Motor neuron (in vitro differentiated cells): ENCODE measurements at regions of chr21 and their contacts with region 1.

Region 1: DNA sequence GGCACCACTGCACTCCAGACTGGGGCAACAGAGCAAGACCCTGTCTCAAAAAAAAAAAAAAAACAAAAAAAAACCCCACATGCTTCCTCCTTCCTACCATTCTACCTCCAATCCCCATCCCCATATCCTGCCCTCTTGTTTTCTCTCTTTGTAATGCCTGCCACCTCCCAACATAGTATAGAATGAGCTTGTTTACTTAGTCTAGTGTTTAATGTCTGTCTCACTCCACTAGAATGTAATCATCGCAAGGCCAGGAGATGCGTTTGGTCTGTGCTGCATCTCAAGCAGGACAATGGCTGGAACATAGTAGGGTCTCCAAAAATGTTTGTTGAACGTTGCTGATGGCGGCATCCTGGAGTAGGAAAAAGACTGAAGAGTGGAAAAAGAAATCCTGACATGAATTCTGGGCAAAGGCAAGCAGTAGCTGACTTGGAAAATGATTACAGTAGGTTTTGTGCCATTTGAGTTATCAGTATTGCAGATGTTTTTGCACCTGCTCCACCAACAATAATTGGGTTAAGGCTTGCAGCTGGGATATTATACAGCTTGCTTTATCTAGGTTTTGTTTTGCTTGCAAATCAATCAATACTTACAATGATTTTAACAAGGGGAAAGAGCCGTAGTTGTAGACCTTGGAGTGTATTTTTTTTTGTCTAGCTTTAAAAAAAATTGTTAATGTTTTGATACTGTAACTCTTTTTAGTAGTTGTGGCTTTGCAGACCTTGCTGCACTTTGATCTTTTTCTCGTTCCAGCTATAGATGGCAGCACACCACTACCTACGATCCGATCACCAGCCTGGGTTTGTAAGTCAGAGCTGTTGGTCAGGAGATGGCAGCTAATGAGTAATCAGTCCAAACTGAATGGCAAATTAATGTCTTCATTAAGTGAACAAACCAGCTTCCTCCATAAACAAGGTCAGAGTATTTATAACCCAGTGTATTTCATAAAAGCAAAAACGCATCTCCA is 62.4 kb downstream of the BACH1 start:
- ATAC-seq: peak in 4 of 8 experiments; percentile 26 to 49 (median 39)
- H3K4me3 ChIP-seq: no peak overlapping the region
- H3K27ac ChIP-seq: no peak overlapping the region
- H3K4me1 ChIP-seq: no peaks in the 10 kb centered on the region

Region 2: DNA sequence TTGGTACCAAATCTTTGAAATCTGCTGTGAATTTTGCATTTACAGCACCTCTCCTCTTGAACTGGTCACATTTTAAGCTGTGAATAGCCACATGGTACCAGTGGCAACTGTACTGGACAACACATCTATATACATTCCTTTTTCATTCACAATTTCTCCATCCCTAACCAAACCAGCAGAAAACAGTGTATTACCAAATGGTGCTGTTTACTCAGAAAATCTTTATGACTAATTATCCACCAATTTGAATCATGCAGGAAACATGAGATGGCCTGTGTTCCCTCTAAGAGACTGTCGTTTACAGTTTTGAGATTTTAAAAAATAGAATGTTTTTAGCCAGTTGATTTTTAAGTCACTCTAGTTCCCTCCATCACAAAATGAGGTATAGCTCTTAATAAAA is 270.1 kb before region 1 on chr21:
- in situ Hi-C with region 1: loop called in 1 of 9 experiments (anchors 10 kb)
- ATAC-seq: peak in 1 of 8 experiments; percentile 12
- H3K4me3 ChIP-seq: no peak overlapping the region
- H3K27ac ChIP-seq: no peak overlapping the region
- H3K4me1 ChIP-seq: no peaks in the 10 kb centered on the region

Region 3: DNA sequence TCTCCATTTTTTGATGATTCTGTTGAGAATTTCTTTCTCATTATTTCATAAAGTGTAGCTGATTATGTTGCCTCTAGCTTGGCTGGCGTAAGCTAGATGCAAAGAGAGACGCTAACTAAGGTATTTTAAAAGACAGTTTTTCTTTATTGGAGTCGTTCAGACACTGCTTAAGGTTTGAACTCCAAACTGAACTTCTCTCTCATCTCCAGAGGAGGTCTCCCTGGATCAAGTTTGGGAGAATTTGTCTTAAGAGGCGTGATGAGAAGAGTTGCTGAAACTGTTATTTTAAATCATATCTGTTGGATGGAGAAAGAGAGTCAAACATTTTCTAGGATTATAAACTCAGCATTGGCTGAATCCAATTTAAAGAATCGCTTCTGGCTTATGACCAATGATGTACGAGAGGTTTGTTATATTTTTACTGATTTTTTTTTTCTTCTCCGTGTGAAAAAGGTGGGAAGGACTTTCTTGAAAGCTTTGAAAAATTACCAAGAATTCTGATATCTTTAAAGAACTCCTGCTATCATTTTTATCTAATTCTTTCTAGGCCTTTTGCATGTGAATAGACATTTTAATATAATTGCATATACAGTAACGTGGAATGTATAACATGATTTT is 196.6 kb before region 1 on chr21:
- in situ Hi-C with region 1: loop called in 2 of 9 experiments (anchors 10 kb)
- ATAC-seq: peak in 4 of 8 experiments; percentile 55 to 90 (median 70)
- H3K4me3 ChIP-seq: no peak overlapping the region
- H3K27ac ChIP-seq: no peak overlapping the region
- H3K4me1 ChIP-seq: no peaks in the 10 kb centered on the region

Region 4: GRCh38 chr21:29245104-29245643 is 115.9 kb before region 1 on chr21:
- in situ Hi-C with region 1: no loop called
- ATAC-seq: peak in 4 of 8 experiments; percentile 34 to 84 (median 41)
- H3K4me3 ChIP-seq: no peak overlapping the region
- H3K27ac ChIP-seq: no peak overlapping the region
- H3K4me1 ChIP-seq: no peaks in the 10 kb centered on the region

Region 5: GRCh38 chr21:29610779-29611360 is 249.8 kb after region 1 on chr21:
- in situ Hi-C with region 1: no loop called
- ATAC-seq: peak in 1 of 8 experiments; percentile 64
- H3K4me3 ChIP-seq: no peak overlapping the region
- H3K27ac ChIP-seq: no peak overlapping the region
- H3K4me1 ChIP-seq: no peaks in the 10 kb centered on the region

Region 6: DNA sequence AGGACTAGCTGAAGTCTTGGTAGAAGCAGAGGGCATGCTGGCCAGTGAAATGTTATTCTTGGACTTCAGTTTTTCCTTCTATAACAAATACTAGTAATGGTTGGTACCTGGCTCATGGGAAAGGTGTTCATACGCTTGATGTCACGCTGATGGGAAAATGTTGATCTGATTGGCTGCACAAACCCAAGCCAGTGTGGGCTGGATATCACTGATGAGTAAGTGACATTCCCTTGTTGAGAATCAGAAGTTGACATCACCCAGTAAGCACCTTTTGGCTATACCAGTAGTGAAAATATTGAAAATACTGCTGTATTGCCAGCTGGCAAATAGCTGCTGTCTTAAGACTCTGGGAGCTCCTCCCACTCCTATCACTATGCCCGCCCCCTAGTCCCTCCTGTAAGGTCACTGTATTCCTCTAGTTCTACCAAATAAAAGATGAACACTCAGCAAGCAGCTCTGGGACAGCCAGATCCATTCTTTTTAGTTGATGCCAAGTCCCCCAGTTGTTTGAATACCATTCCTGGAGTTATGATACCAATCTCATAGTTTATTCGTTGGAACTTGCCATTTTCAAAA is 410.5 kb after region 1 on chr21:
- in situ Hi-C with region 1: no loop called
- ATAC-seq: no peak
- H3K4me3 ChIP-seq: no peak overlapping the region
- H3K27ac ChIP-seq: no peak overlapping the region
- H3K4me1 ChIP-seq: no peaks in the 10 kb centered on the region